Astrocyte of the cerebellum (primary cell): ENCODE measurements at regions of chr11 and their contacts with region 1.

Region 1: GRCh38 chr11:8018484-8019313 is 31.6 kb downstream of the EIF3F start:
- DNase-seq: no peak
- H3K4me3 ChIP-seq: peak overlapping the region; percentile 59
- CTCF ChIP-seq: no peak

Region 2: DNA sequence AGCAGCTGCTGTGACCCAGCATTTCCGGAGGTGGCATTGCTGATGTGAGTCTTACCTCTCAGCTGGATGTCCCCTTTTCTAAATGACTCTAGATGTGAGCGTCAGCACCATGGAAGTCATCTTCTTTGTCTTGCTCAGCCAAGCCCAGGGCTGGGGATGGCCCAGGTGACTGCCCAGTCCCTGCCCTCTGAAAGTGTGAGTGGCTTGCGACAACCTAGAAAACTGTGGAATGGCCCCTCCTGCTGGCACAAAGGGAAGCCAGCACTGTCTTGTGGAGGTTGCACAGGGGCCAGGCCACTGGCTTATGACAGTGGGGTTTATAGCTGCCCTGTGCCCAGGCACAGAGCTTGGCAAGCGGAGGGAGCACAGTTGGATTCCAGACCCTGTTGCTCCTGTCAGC is 68.5 kb after region 1 on chr11:
- in situ Hi-C with region 1: loop called (anchors 5 kb)
- DNase-seq: no peak
- H3K4me3 ChIP-seq: no peak overlapping the region
- CTCF ChIP-seq: peak; percentile 21